Activated T-helper 2 cell treated with anti-CD3 and anti-CD28 coated beads, Interferon-gamma antibody, Interleukin-2, Interleukin-4, amounts not matched to agents 10 μg/mL and 5 μg/mL and 100 μg/mL, durations not matched to agents 14 hours and 24 hours and 36 hours (primary cell): ENCODE measurements at regions of chr20 and their contacts with region 1.

Region 1: DNA sequence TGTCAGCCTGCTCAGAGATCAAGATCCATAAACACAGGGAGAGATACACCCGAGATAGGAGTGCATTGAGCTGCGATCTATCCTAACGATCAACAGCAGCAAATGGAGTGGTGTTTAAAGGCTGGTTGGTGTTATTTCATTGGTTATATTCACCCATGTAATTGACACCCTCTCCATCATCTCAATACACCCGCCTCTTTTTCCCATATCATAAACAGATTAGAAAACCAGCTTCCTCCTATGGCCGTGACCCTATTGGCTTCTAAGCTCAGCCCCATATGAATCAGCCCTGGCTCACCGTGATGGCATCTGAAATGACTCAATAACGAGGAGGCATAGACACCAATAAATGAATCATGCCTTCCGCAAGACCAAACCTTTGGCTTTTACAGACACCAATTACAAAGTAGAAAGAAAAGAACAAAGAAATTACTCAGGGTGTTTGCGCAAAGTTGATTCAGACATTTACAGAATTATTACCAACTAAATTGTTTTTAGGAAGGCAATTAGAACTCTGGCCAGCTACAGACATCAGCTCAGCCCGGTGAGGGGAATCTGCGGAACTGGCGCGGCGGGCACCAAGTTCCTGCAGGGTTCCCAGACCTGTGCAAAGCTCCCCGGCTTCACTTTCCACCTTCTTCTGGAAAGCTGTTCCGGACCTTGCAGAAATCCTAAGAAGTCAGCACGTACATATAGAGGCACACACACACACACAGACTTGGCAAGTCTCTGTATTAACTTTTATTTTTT is 11.5 kb downstream of the PMEPA1 start:
- DNase-seq: peak; percentile 31
- H3K4me3 Mint-ChIP-seq: no peak overlapping the region
- H3K27ac Mint-ChIP-seq: peak overlapping the region; percentile 76
- H3K4me1 Mint-ChIP-seq: peaks cover 28% of the 10 kb centered on the region
- H3K27me3 Mint-ChIP-seq: peaks cover 13% of the 10 kb centered on the region

Region 2: DNA sequence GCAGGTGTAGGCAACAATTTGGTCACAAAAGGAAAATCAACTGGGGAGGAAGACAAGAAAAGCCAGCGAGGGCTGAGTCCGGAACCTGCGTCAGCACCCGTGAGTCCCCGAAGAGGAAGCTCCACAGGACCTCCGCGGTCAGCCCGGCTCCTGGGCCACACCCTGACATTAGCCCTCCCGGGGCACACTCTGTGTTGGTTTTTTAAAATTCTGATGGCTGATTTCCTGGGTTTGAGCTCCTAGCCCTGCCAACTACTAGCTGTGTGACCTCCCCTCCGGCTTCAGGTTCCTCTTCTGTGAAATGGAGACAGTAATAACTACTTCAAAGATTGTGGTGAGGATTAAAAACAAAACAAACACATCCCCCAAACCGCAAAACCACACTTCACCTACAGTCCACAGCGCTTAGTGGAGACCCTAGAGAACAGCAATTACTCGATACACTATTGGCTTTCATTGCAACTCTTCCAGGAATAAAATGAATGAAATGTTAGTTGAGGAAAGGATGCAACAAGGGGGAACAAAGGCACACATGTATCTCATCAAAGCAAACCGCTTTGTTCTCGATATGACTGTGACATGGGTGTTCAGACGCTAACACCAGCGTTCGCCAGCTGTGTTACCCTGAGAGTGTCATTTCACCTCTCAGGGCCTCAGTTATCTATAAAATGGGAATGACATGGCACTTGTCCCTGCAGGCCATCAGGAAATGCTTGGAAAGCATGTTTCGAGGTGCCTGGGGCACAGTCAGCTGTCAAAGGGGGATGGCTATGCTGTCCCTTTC is 79.0 kb before region 1 on chr20:
- intact Hi-C with region 1: loop called (anchors 1 kb)
- DNase-seq: peak; percentile 77
- H3K4me3 Mint-ChIP-seq: peak overlapping the region; percentile 65
- H3K27ac Mint-ChIP-seq: peak overlapping the region; percentile 91
- H3K4me1 Mint-ChIP-seq: peaks cover 47% of the 10 kb centered on the region
- H3K27me3 Mint-ChIP-seq: peaks cover 17% of the 10 kb centered on the region

Region 3: DNA sequence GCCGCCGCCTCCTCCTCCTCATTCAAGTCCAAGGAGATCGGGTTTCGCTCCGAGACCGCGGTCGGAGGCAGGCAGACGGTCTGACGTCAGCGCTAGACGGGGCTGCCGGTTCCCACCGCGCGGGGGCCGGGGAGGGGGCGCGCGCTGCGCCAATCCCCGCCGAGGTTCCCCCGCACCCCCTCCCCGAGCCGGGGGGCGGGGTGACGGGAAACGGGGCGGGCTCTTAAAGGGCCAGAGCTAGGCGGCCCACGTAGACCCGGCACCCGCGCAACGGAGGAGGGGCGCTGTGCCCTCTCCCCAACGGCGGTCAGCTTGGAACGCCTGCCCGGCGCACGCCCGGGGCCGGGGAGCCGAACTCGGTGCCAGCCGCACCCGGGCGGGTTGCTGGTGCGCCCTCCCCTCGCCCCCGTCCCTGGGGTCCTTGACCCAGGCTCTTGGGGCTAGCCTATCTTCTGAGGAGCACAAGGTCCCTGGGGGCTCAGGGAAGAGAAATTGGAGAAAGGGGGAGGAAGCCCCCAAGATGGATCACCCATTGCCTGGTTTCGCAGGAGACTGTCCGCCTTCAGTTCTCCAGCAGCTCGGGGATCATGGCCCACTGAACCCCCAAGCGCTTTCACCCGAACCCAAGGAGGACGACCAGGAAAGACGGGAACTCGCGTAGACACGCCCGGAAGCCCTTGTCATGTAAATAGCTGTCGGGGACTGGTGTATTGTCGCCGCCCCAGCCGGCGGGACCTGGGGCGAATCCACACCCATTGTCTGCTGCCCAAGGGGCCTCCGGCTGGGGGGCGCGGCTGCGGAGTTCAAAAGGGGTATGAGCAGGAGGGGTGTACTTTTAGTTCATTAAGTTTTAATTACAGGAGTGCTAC is 11.9 kb after region 1 on chr20 and contains the start of gene PMEPA1:
- intact Hi-C with region 1: loop called (anchors 1 kb)
- DNase-seq: peak; percentile 80
- H3K4me3 Mint-ChIP-seq: peak within 1 kb of the TSS; percentile 84
- H3K27ac Mint-ChIP-seq: peak within 1 kb of the TSS; percentile 57
- H3K4me1 Mint-ChIP-seq: peaks cover 14% of the 10 kb centered on the region
- H3K27me3 Mint-ChIP-seq: peaks cover 53% of the 10 kb centered on the region
- total RNA-seq, gene PMEPA1: 0.99 and 1.1 TPM in 2 replicates

Region 4: DNA sequence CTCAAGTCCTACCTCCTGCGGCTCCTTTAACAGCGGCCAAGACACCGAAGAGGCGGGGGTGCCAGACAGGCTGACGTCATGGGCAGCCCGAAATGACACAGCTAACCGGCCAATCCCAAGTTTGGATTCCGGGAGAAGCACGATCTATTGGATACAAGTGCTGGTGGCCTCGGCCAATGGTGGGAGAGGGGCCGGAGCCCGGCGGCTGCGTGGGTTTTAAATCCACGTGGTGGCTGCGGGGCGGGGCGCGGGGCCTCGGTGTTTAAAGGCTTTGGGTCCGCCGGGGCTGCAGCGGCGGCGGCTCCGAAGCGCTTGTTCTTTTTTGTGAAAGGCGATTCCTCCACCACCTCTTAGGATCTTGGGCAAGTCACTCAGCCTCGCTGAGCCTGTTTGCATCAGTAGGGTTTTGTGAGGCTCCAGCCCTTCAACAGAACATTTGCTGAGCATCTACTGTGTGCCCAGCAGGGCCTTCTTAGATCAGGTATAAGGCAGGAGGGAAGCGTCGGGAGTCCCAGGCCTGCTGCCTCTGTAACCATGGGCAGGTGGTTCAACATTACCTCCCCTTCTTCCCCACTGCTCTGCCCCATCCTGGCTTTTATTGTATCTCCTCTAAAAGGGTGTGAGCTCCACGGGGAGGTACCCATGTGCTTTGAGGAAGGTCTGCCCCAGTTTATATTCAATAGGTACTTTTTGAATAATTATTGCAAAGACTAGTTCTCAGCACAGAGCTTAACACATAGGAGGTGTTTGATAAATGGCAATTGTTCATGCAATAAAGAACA is 20.4 kb after region 1 on chr20:
- intact Hi-C with region 1: loop called (anchors 1 kb)
- DNase-seq: peak; percentile 83
- H3K4me3 Mint-ChIP-seq: peak overlapping the region; percentile 8
- H3K27ac Mint-ChIP-seq: no peak overlapping the region
- H3K4me1 Mint-ChIP-seq: peaks cover 7% of the 10 kb centered on the region
- H3K27me3 Mint-ChIP-seq: peaks cover 9% of the 10 kb centered on the region

Region 5: DNA sequence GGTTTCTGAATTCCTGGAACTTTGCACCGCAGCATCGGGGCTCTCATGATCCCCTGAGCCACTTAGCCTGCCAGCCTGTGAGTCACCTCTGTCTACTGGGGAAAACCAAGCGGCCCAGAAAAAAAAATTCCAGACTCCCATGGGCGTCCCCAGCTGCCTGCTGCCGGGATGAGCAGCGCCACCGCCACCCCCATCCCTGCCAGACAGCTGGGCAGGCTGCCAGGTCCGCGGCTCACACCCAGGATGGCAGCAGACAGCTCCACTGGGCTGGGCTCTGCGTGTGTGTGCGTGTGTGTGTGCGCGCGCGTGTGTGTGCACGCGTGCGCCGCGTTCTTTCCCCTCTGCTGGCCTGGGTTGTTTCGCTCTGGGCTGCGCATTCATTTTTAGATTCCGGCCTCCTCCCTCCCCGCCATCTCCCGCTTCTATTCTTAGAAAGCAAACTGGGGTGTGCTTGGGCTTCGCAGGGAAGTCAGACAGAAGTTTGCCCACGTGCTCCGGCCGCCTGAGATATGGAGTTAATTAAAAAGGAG is 50.4 kb after region 1 on chr20:
- intact Hi-C with region 1: loop called (anchors 5 kb)
- DNase-seq: peak; percentile 12
- H3K4me3 Mint-ChIP-seq: peak overlapping the region; percentile 19
- H3K27ac Mint-ChIP-seq: no peak overlapping the region
- H3K4me1 Mint-ChIP-seq: peaks cover 7% of the 10 kb centered on the region
- H3K27me3 Mint-ChIP-seq: peaks cover 32% of the 10 kb centered on the region

Region 6: DNA sequence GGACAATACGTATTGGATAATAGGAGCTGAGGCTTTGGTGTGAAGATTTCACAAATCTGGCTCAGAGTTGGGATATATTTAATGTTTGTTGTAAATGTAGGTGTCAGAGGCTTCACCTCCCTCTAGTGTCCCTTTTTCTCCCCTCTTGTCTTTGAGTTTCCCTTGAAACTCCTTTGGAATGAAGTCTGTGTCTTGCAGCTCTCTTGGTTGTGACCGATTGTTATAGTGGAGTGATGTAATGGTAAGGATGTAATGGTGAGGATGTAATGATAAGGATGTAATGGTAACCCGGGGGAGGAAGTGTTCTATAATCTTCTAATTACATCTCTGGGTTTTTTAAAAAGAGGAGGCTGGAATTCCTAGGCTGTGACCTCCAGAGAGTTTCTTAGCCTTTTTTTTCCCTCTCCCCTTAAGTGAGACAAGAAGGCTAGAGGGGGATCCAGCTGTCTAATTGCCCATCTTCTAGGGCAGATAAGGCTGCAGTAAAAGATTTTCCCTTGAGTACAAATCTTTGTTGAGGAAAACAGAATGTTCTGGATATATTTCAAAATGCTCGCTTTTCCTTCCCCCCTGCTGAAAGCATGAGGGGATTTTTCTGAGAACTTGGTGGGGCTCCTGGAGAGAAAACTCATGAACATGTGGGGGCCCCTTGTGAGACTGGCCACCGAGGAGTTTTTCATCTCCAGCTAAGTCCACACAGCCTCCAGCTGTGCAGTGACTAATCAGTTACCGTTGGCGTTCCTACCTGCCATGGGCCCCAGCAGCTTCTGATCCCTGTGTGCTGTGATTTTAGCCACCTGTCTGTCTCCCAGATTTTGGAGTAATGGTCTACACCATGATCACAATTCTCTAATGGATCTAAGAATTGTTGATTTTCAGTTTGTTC is 168.2 kb after region 1 on chr20:
- intact Hi-C with region 1: no loop called
- DNase-seq: no peak
- H3K4me3 Mint-ChIP-seq: no peak overlapping the region
- H3K27ac Mint-ChIP-seq: no peak overlapping the region
- H3K4me1 Mint-ChIP-seq: no peaks in the 10 kb centered on the region
- H3K27me3 Mint-ChIP-seq: peaks cover 20% of the 10 kb centered on the region

Region 7: DNA sequence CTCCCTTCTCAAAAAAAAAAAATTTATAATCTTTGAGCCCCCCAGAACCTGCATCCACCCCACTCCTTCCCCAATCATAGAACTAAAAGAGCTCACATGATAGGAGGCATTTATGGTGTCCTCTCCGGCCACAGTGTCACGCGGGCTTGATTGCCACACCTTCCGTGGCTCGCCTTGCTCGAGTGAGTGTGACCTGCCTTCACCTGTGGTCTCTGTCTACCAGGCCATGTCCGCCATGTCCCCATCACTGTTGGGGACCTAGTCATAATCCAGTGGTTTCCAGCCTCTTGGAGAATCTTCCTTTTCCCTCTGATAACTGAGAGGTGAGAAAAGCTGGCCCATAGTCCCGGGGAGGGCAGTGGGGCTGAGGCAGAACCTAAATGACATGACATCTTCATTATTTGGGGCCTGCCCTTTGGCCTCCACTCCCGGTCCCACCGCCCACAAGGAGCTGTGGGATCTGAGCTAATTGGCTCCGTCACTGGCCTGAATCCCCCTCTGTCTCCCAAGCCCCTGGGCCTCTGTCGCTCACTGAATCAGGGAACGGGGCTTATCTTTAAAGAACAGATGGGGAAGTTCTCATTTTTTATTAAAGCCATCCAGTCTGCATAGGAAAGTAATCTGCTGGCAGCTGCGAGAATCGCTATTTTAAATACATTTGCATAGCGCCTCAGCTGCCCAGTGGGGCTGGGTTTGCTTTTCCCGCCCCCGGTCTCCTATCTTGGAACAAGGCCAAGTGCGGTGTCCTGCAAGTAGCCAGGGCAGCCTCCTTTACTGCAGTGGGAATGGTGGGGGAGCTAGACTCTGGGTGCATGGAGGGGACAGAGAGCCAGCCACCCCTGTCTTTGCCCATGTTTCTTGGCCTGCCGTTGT is 209.1 kb after region 1 on chr20:
- intact Hi-C with region 1: no loop called
- DNase-seq: no peak
- H3K4me3 Mint-ChIP-seq: no peak overlapping the region
- H3K27ac Mint-ChIP-seq: no peak overlapping the region
- H3K4me1 Mint-ChIP-seq: peaks cover under 1% of the 10 kb centered on the region
- H3K27me3 Mint-ChIP-seq: peaks cover 17% of the 10 kb centered on the region